Activated CD4-positive, alpha-beta T cell treated with anti-CD3 and anti-CD28 coated beads for 36 hours (primary cell): ENCODE measurements at regions of chr16 and their contacts with region 1.

Region 1: GRCh38 chr16:10944249-10945064 is at the start of gene CLEC16A:
- DNase-seq: peak; percentile 98
- ATAC-seq: peak; percentile 77
- H3K4me3 Mint-ChIP-seq: peak within 1 kb of the TSS; percentile 95
- H3K27ac Mint-ChIP-seq: peak within 1 kb of the TSS; percentile 80
- H3K4me1 Mint-ChIP-seq: peaks cover 69% of the 10 kb centered on the region
- H3K27me3 Mint-ChIP-seq: no peaks in the 10 kb centered on the region
- total RNA-seq, gene CLEC16A: 23.5 to 25.4 TPM

Region 2: GRCh38 chr16:8963825-8964441 is 1980.5 kb before region 1 on chr16 and contains the start of gene USP7:
- CTCF ChIA-PET with region 1: no interaction called
- POLR2A ChIA-PET with region 1: no interaction called
- intact Hi-C with region 1: loop called in 1 of 2 experiments (anchors 10 kb)
- DNase-seq: peak; percentile 97
- ATAC-seq: peak; percentile 91
- H3K4me3 Mint-ChIP-seq: peak within 1 kb of the TSS; percentile 95
- H3K27ac Mint-ChIP-seq: peak within 1 kb of the TSS; percentile 94
- H3K4me1 Mint-ChIP-seq: peaks cover 34% of the 10 kb centered on the region
- H3K27me3 Mint-ChIP-seq: peaks cover 2% of the 10 kb centered on the region
- total RNA-seq, gene USP7: 165 to 198 TPM

Region 3: DNA sequence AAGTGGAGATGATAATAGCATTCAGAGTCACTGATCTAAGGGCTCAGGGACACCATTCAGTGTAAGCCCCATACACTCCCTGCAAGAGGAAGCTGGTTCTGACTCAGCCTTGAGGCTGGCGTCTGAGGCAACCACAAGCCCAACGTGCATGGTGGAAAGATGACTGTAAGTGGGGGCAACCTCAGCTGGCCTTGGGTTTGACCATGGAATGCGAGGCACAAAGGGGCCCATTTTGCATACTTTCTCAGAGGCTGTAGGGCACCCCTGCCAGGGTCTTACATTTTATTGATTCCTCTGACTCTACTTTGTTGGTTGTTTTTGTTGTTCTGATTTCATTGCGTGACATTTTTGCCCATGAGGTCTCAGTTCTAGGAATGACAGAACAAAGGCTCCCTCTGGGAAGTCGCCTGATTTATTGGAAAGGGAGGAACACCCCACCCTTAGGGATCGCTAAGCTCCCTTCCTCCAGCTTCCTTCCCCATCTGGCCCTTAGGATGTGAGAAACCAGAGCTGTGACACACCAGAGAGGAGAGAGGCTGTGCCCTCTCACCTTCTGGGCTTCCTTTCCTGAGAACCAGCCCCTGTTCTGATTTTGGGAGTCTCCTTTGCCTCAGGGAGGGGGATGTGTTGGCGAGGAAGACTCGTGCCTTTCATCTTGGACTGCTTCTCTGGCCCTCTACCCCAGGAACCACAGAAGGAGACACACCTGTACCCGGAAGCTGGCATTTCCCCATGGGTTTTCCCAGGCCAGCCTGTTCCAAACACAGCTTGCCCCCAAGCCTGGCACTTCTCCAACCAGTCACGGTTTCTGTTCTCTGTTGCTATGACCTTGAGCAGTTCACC is 73.1 kb before region 1 on chr16:
- CTCF ChIA-PET with region 1: no interaction called
- POLR2A ChIA-PET with region 1: no interaction called
- intact Hi-C with region 1: loop called in 1 of 2 experiments (anchors 2 kb)
- DNase-seq: peak; percentile 87
- ATAC-seq: peak; percentile 92
- H3K4me3 Mint-ChIP-seq: peak overlapping the region; percentile 7
- H3K27ac Mint-ChIP-seq: peak overlapping the region; percentile 71
- H3K4me1 Mint-ChIP-seq: peaks cover 51% of the 10 kb centered on the region
- H3K27me3 Mint-ChIP-seq: peaks cover 43% of the 10 kb centered on the region

Region 4: DNA sequence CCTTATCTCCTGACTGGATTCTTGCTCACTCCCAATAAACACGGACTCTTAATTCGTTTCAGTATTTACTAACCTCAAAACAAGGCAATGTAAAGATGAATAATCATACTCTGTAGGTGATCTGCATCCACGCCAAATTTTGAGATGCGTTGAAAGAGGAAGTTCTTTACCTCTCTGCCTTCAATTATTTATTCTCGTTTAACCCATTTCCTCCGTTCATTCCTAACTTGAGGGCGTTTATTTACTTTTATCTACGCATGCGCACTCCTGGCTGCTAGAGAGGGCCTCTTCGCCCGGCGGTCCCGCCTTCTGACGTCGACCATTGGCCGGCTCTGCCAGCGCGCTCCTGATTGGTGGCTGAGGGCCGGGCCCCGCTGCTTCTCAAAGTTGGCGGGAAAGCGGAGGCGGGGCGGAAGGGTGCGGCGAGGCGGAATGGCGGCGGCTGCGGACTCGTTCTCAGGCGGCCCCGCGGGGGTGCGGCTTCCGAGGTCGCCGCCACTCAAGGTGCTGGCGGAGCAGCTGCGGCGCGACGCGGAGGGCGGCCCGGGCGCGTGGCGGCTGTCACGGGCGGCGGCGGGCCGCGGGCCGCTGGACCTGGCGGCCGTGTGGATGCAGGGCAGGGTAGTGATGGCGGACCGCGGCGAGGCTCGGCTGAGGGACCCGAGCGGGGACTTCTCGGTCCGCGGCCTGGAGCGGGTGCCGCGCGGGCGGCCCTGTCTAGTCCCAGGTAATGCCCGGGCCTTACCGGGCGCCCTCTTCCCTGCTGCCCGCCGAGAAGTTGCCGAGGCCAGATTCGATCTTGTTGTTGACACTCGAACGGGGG is 400.8 kb after region 1 on chr16 and contains the start of gene RMI2:
- CTCF ChIA-PET with region 1: no interaction called
- POLR2A ChIA-PET with region 1: no interaction called
- intact Hi-C with region 1: loop called in 1 of 2 experiments (anchors 1 kb)
- DNase-seq: peak; percentile 99
- ATAC-seq: peak; percentile 96
- H3K4me3 Mint-ChIP-seq: peak within 1 kb of the TSS; percentile 90
- H3K27ac Mint-ChIP-seq: peak within 1 kb of the TSS; percentile 94
- H3K4me1 Mint-ChIP-seq: peaks cover 49% of the 10 kb centered on the region
- H3K27me3 Mint-ChIP-seq: no peaks in the 10 kb centered on the region
- total RNA-seq, gene RMI2: 56.0 to 69.8 TPM

Region 5: GRCh38 chr16:11742539-11743307 is 798.3 kb after region 1 on chr16 and contains the start of gene TXNDC11:
- CTCF ChIA-PET with region 1: no interaction called
- POLR2A ChIA-PET with region 1: no interaction called
- intact Hi-C with region 1: loop called in 1 of 2 experiments (anchors 2 kb)
- DNase-seq: peak; percentile 100
- ATAC-seq: peak; percentile 92
- H3K4me3 Mint-ChIP-seq: peak within 1 kb of the TSS; percentile 88
- H3K27ac Mint-ChIP-seq: peak within 1 kb of the TSS; percentile 96
- H3K4me1 Mint-ChIP-seq: peaks cover 50% of the 10 kb centered on the region
- H3K27me3 Mint-ChIP-seq: no peaks in the 10 kb centered on the region
- total RNA-seq, gene TXNDC11: 27.3 to 28.3 TPM

Region 6: GRCh38 chr16:11915644-11916523 is 971.4 kb after region 1 on chr16 and contains the start of gene GSPT1:
- CTCF ChIA-PET with region 1: no interaction called
- POLR2A ChIA-PET with region 1: no interaction called
- intact Hi-C with region 1: loop called in 1 of 2 experiments (anchors 1 kb)
- DNase-seq: peak; percentile 100
- ATAC-seq: peak; percentile 89
- H3K4me3 Mint-ChIP-seq: peak within 1 kb of the TSS; percentile 89
- H3K27ac Mint-ChIP-seq: peak within 1 kb of the TSS; percentile 96
- H3K4me1 Mint-ChIP-seq: peaks cover 32% of the 10 kb centered on the region
- H3K27me3 Mint-ChIP-seq: no peaks in the 10 kb centered on the region
- total RNA-seq, gene GSPT1: 234 to 260 TPM